Esophagus muscularis mucosa (tissue), 4 donors: ENCODE measurements at regions of chr2 and their contacts with region 1.

Region 1: GRCh38 chr2:153606623-153607022 is 128.1 kb upstream of the RPRM start:
- DNase-seq: no peak
- H3K4me3 ChIP-seq: no peak overlapping the region
- H3K27ac ChIP-seq: no peak overlapping the region
- H3K4me1 ChIP-seq: no peaks in the 10 kb centered on the region
- H3K27me3 ChIP-seq: no peaks in the 10 kb centered on the region
- CTCF ChIP-seq: no peak
- EP300 ChIP-seq: no peak
- POLR2A ChIP-seq: no peak

Region 2: DNA sequence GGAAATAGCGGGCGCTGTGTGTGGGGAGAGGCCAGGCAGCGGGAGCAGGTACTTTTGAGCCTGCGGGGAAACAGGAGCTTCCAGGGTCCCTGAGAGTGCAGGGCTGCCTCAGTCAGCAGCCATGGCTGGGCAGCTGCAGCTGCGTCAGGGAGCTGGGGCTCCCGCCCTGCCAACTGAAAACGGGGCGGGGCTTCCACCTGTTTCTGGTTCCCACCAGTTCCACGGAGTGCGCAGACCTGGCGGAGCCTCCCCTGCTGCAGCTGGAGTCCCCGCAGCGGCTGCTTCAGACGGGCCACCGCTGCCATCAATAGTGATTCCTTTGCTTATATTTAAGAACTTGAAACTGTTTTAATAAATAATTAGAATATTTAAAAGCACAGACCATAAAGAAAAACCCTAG is 97.5 kb before region 1 on chr2:
- intact Hi-C with region 1: no loop called
- DNase-seq: no peak
- H3K4me3 ChIP-seq: no peak overlapping the region
- H3K27ac ChIP-seq: no peak overlapping the region
- H3K4me1 ChIP-seq: no peaks in the 10 kb centered on the region
- H3K27me3 ChIP-seq: peaks cover 0 to 3% (median 0%) of the 10 kb centered on the region in 4 donors
- CTCF ChIP-seq: no peak
- EP300 ChIP-seq: no peak
- POLR2A ChIP-seq: no peak

Region 3: DNA sequence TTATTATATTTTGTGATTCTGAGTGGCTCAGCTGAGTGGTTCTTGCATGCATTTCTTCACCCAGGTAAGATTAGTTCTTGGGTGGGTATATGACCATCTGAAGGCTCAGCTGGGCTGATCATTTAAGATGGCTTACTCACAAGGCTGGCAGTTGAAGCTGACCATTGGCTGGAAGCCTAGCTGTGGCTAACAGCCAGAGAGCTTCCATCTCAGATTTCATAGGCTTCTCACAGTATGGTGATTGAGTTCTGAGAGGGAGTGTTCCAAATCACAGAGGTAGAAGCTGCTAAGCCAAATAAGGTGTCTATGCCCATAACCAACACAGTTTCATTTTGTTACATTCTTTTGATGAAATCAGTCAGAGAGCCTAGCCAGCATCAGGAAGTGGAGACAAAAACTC is 10.7 kb before region 1 on chr2:
- intact Hi-C with region 1: loop called (anchors 1 kb)
- DNase-seq: no peak
- H3K4me3 ChIP-seq: no peak overlapping the region
- H3K27ac ChIP-seq: no peak overlapping the region
- H3K4me1 ChIP-seq: no peaks in the 10 kb centered on the region
- H3K27me3 ChIP-seq: no peaks in the 10 kb centered on the region
- CTCF ChIP-seq: no peak
- EP300 ChIP-seq: no peak
- POLR2A ChIP-seq: no peak